Activated T-helper 1 cell treated with anti-CD3 and anti-CD28 coated beads, Interleukin-12 subunit alpha, Interleukin-12 subunit beta, Interleukin-2, Interleukin-4 antibody, amounts not matched to agents 30 ng/mL and 10 ng/mL and 1 ng/mL, durations not matched to agents 14 hours and 24 hours and 36 hours (primary cell): ENCODE measurements at regions of chr7 and their contacts with region 1.

Region 1: GRCh38 chr7:137992550-137993394 is 9.1 kb downstream of the CREB3L2 start:
- DNase-seq: peak; percentile 29
- H3K4me3 Mint-ChIP-seq: peak overlapping the region; percentile 56
- H3K27ac Mint-ChIP-seq: peak overlapping the region; percentile 77
- H3K4me1 Mint-ChIP-seq: peaks cover 41% of the 10 kb centered on the region
- H3K27me3 Mint-ChIP-seq: no peaks in the 10 kb centered on the region

Region 2: GRCh38 chr7:137545059-137545716 is 447.6 kb before region 1 on chr7:
- intact Hi-C with region 1: no loop called
- DNase-seq: no peak
- H3K4me3 Mint-ChIP-seq: no peak overlapping the region
- H3K27ac Mint-ChIP-seq: no peak overlapping the region
- H3K4me1 Mint-ChIP-seq: no peaks in the 10 kb centered on the region
- H3K27me3 Mint-ChIP-seq: no peaks in the 10 kb centered on the region

Region 3: GRCh38 chr7:137934941-137935883 is 57.6 kb before region 1 on chr7:
- intact Hi-C with region 1: loop called (anchors 2 kb)
- DNase-seq: no peak
- H3K4me3 Mint-ChIP-seq: peak overlapping the region; percentile 81
- H3K27ac Mint-ChIP-seq: peak overlapping the region; percentile 89
- H3K4me1 Mint-ChIP-seq: peaks cover 40% of the 10 kb centered on the region
- H3K27me3 Mint-ChIP-seq: no peaks in the 10 kb centered on the region

Region 4: GRCh38 chr7:137961200-137962177 is 31.3 kb before region 1 on chr7:
- intact Hi-C with region 1: loop called (anchors 2 kb)
- DNase-seq: no peak
- H3K4me3 Mint-ChIP-seq: no peak overlapping the region
- H3K27ac Mint-ChIP-seq: peak overlapping the region; percentile 5
- H3K4me1 Mint-ChIP-seq: peaks cover 42% of the 10 kb centered on the region
- H3K27me3 Mint-ChIP-seq: no peaks in the 10 kb centered on the region

Region 5: GRCh38 chr7:138008547-138009349 is 16.0 kb after region 1 on chr7:
- intact Hi-C with region 1: no loop called
- DNase-seq: peak; percentile 24
- H3K4me3 Mint-ChIP-seq: no peak overlapping the region
- H3K27ac Mint-ChIP-seq: no peak overlapping the region
- H3K4me1 Mint-ChIP-seq: peaks cover 6% of the 10 kb centered on the region
- H3K27me3 Mint-ChIP-seq: peaks cover 14% of the 10 kb centered on the region